A673 (cell line): ENCODE measurements at regions of chr1 and their contacts with region 1.

Region 1: DNA sequence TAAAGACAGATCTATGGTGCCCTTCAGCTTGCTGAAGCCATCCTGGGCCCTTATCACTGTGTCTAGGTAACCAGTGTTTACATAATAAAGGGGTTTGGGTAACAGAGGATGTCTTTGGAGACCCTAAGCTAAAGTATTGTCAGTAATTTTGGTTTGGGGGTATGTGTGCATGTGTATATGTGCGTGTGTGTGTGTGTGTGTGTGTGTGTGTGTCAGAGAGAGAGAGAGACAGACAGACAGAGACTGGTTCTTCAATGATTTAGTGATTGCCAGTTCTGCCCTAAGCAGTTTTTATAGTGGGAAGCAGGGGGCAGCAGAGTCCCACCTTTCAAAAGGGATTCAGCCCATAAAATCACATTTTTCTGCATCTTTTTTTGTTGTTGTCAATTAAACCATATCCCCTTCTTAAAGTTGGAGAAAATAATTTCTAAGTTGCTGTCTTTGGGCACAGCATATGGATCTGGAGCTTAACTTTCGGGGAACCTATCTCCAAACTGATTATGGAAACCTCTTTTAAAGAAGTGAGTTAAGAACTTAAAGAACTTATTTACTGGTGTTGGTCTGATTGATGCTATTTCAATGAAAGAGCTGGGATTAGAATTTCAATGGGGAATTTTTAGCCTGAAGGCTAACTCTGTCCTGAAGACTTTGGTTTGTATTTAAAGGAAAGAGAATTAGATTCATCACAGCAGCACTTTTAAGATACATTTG is 51.1 kb downstream of the ZNF326 start:
- DNase-seq: peak; percentile 82
- H3K4me3 ChIP-seq: no peak overlapping the region
- H3K27ac ChIP-seq: peak overlapping the region; percentile 24
- H3K4me1 ChIP-seq: peaks cover 42% of the 10 kb centered on the region
- H3K27me3 ChIP-seq: no peaks in the 10 kb centered on the region
- CTCF ChIP-seq: peak; percentile 85

Region 2: DNA sequence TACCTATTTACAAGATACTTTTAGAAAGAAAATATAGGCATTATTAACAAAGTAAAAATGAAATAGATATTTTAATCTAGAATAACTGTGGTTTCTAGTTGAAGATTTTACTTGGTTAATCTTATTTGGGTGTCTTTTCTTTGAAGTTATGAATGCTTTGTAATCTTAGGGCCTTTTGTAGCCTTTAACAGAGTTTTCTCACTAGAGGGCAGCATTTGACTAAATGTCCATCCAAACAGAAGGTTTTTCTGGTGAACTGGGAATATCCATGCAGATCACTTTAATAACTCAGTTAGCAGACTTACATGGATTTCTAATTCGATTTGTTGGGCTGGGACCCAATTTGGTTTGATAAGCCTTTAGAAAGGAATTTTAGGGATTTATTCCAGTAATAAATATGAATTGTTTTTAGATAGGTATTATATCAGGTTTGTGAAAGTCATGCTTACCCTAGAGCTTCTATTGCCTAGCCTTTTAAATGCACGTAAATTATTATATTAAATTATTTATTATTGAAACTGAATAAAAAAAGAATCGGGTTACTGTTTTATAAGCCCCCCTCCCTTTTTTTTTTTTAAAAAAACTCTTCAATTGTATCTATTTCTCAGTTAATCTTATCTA is 68.6 kb after region 1 on chr1:
- CTCF ChIA-PET with region 1: no interaction called
- POLR2A ChIA-PET with region 1: no interaction called
- intact Hi-C with region 1: loop called (anchors 1 kb)
- DNase-seq: peak; percentile 90
- H3K4me3 ChIP-seq: no peak overlapping the region
- H3K27ac ChIP-seq: no peak overlapping the region
- H3K4me1 ChIP-seq: peaks cover 26% of the 10 kb centered on the region
- H3K27me3 ChIP-seq: no peaks in the 10 kb centered on the region
- CTCF ChIP-seq: peak; percentile 86

Region 3: GRCh38 chr1:90198616-90199332 is 152.8 kb after region 1 on chr1:
- CTCF ChIA-PET with region 1: no interaction called
- POLR2A ChIA-PET with region 1: no interaction called
- intact Hi-C with region 1: no loop called
- DNase-seq: no peak
- H3K4me3 ChIP-seq: no peak overlapping the region
- H3K27ac ChIP-seq: no peak overlapping the region
- H3K4me1 ChIP-seq: no peaks in the 10 kb centered on the region
- H3K27me3 ChIP-seq: no peaks in the 10 kb centered on the region
- CTCF ChIP-seq: no peak

Region 4: GRCh38 chr1:90616395-90616794 is 570.4 kb after region 1 on chr1:
- CTCF ChIA-PET with region 1: no interaction called
- POLR2A ChIA-PET with region 1: no interaction called
- intact Hi-C with region 1: loop called (anchors 5 kb)
- DNase-seq: peak; percentile 73
- H3K4me3 ChIP-seq: no peak overlapping the region
- H3K27ac ChIP-seq: no peak overlapping the region
- H3K4me1 ChIP-seq: peaks cover 32% of the 10 kb centered on the region
- H3K27me3 ChIP-seq: no peaks in the 10 kb centered on the region
- CTCF ChIP-seq: peak; percentile 70

Region 5: GRCh38 chr1:90721210-90722194 is 675.5 kb after region 1 on chr1:
- CTCF ChIA-PET with region 1: interaction called, 6 read pairs
- POLR2A ChIA-PET with region 1: no interaction called
- intact Hi-C with region 1: loop called (anchors 5 kb)
- DNase-seq: peak; percentile 96
- H3K4me3 ChIP-seq: peak overlapping the region; percentile 75
- H3K27ac ChIP-seq: peak overlapping the region; percentile 88
- H3K4me1 ChIP-seq: peaks cover 24% of the 10 kb centered on the region
- H3K27me3 ChIP-seq: no peaks in the 10 kb centered on the region
- CTCF ChIP-seq: peak; percentile 96